Left lung (tissue), 14 donors: ENCODE measurements at regions of chr1 and their contacts with region 1.

Region 1: GRCh38 chr1:9292361-9293240 is at the start of gene SPSB1:
- DNase-seq: peak; percentile 70 to 91 (median 83)
- ATAC-seq: peak; percentile 60
- H3K4me3 ChIP-seq: peak within 1 kb of the TSS; percentile 74 to 90
- H3K27ac ChIP-seq: peak within 1 kb of the TSS; percentile 83 to 89
- H3K4me1 ChIP-seq: peaks cover 11 to 58% of the 10 kb centered on the region in 2 donors
- H3K27me3 ChIP-seq: peaks cover 0 to 6% of the 10 kb centered on the region in 2 donors
- CTCF ChIP-seq: no peak
- polyA plus RNA-seq, gene SPSB1: 6.1 to 9.2 (median 6.9) TPM

Region 2: GRCh38 chr1:9438431-9439073 is 146.0 kb after region 1 on chr1:
- intact Hi-C with region 1: loop called in 1 of 2 experiments (anchors 5 kb)
- DNase-seq: peak in 1 of 4 donors; percentile 63
- ATAC-seq: peak; percentile 54
- H3K4me3 ChIP-seq: no peak overlapping the region
- H3K27ac ChIP-seq: peak overlapping the region; percentile 45 to 78
- H3K4me1 ChIP-seq: peaks cover 5 to 17% of the 10 kb centered on the region in 2 donors
- H3K27me3 ChIP-seq: no peaks in the 10 kb centered on the region
- CTCF ChIP-seq: no peak

Region 3: GRCh38 chr1:9455487-9456234 is 163.1 kb after region 1 on chr1:
- intact Hi-C with region 1: loop called in 1 of 2 experiments (anchors 5 kb)
- DNase-seq: peak in 3 of 4 donors; percentile 63 to 85 (median 80)
- ATAC-seq: peak; percentile 92
- H3K4me3 ChIP-seq: no peak overlapping the region
- H3K27ac ChIP-seq: no peak overlapping the region
- H3K4me1 ChIP-seq: no peaks in the 10 kb centered on the region
- H3K27me3 ChIP-seq: no peaks in the 10 kb centered on the region
- CTCF ChIP-seq: peak; percentile 67 to 80

Region 4: GRCh38 chr1:9486466-9487140 is 194.0 kb after region 1 on chr1:
- intact Hi-C with region 1: loop called in 1 of 2 experiments (anchors 10 kb)
- DNase-seq: peak in 1 of 4 donors; percentile 62
- ATAC-seq: peak; percentile 7
- H3K4me3 ChIP-seq: no peak overlapping the region
- H3K27ac ChIP-seq: peak overlapping the region in 1 of 2 donors; percentile 19
- H3K4me1 ChIP-seq: peaks cover 3 to 4% of the 10 kb centered on the region in 2 donors
- H3K27me3 ChIP-seq: no peaks in the 10 kb centered on the region
- CTCF ChIP-seq: no peak